A549 (cell line): ENCODE measurements at regions of chr5 and their contacts with region 1.

Region 1: DNA sequence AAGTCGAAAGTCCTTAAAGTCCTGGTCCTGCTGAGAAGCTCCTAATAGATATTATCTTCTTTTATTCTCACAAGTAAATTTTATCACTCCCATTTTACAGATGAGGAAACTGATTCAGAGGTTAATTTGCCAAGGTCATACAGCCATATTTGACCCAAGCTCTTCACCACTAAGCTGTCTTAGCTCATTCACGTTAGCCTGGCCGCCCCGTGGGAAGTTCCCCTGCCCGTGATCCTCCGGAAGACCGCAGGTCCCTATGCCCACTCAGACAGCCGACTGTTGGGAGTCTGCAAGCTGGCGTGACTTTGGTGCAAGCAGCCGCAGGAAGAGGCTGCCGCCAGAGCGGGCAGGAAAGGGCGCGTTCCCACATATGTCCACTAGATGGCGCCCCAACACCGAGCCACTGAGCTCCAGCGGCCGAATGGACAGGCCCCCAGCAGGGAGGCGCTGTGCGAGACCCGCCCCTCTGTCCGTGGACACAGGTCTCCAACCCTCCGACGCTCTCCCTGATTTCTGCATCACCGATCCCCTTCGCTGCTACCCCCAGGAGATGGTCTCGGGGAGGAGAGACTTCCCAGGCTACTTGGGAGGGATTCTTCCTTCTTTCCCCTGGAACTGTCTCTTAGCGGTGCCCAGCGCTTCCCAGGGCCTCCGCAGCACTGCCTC is 10.0 kb upstream of the ARAP3 start:
- DNase-seq: peak; percentile 71 to 74
- ATAC-seq: peak; percentile 91 to 96
- H3K4me3 ChIP-seq: peak overlapping the region; percentile 38
- H3K27ac ChIP-seq: peak overlapping the region in 1 of 2 experiments; percentile 57; a peak in 2 of 6 replicates
- H3K4me1 ChIP-seq: peaks cover 2% of the 10 kb centered on the region; the same call in 1 of the 3 replicates
- CTCF ChIP-seq: peak; percentile 98
- EP300 ChIP-seq: no peak
- POLR2A ChIP-seq: no peak
- RAD21 ChIP-seq: peak; percentile 95 to 99

Region 2: GRCh38 chr5:141223112-141223783 is 468.8 kb before region 1 on chr5 and contains the start of gene PCDHB14:
- CTCF ChIA-PET with region 1: no interaction called
- POLR2A ChIA-PET with region 1: no interaction called
- DNase-seq: peak in 1 of 2 experiments; percentile 36
- ATAC-seq: peak in 1 of 2 experiments; percentile 69; a peak in 3 of 6 replicates
- H3K4me3 ChIP-seq: peak within 1 kb of the TSS; percentile 17; the same call in 1 of the 3 replicates
- H3K27ac ChIP-seq: no peak within 1 kb of the TSS
- H3K4me1 ChIP-seq: no peaks in the 10 kb centered on the region
- CTCF ChIP-seq: peak; percentile 32; the same call in 2 of the 3 replicates
- EP300 ChIP-seq: no peak
- POLR2A ChIP-seq: no peak
- RAD21 ChIP-seq: peak; percentile 49 to 55
- polyA plus RNA-seq, gene PCDHB14: 0.13 and 0.14 TPM in 2 replicates

Region 3: GRCh38 chr5:141664732-141665461 is 27.1 kb before region 1 on chr5:
- CTCF ChIA-PET with region 1: interaction called, 120 read pairs
- POLR2A ChIA-PET with region 1: interaction called, 3 read pairs
- DNase-seq: peak; percentile 69 to 78
- ATAC-seq: peak; percentile 89 to 97
- H3K4me3 ChIP-seq: no peak overlapping the region
- H3K27ac ChIP-seq: no peak overlapping the region
- H3K4me1 ChIP-seq: peaks cover 4% of the 10 kb centered on the region; the same call in 1 of the 3 replicates
- CTCF ChIP-seq: peak; percentile 91
- EP300 ChIP-seq: no peak
- POLR2A ChIP-seq: no peak
- RAD21 ChIP-seq: peak; percentile 84

Region 4: GRCh38 chr5:141757402-141757801 is 65.4 kb after region 1 on chr5:
- CTCF ChIA-PET with region 1: interaction called, 10 read pairs
- POLR2A ChIA-PET with region 1: no interaction called
- DNase-seq: peak; percentile 54 to 72
- ATAC-seq: peak; percentile 71 to 91
- H3K4me3 ChIP-seq: no peak overlapping the region
- H3K27ac ChIP-seq: no peak overlapping the region
- H3K4me1 ChIP-seq: no peaks in the 10 kb centered on the region
- CTCF ChIP-seq: peak; percentile 35; the same call in 2 of the 3 replicates
- EP300 ChIP-seq: no peak
- POLR2A ChIP-seq: no peak
- RAD21 ChIP-seq: peak; percentile 48 to 63; a peak in 3 of 5 replicates

Region 5: GRCh38 chr5:141940695-141941271 is 248.8 kb after region 1 on chr5:
- CTCF ChIA-PET with region 1: interaction called, 17 read pairs
- POLR2A ChIA-PET with region 1: no interaction called
- DNase-seq: peak in 1 of 2 experiments; percentile 23
- ATAC-seq: peak; percentile 75 to 79
- H3K4me3 ChIP-seq: no peak overlapping the region
- H3K27ac ChIP-seq: peak overlapping the region in 1 of 2 experiments; percentile 29; a peak in 1 of 6 replicates
- H3K4me1 ChIP-seq: peaks cover 9% of the 10 kb centered on the region; the same call in 2 of the 3 replicates
- CTCF ChIP-seq: no peak
- EP300 ChIP-seq: no peak
- POLR2A ChIP-seq: no peak
- RAD21 ChIP-seq: no peak

Region 6: GRCh38 chr5:141976176-141976575 is 284.2 kb after region 1 on chr5:
- CTCF ChIA-PET with region 1: interaction called, 325 read pairs
- POLR2A ChIA-PET with region 1: no interaction called
- DNase-seq: no peak
- ATAC-seq: no peak
- H3K4me3 ChIP-seq: no peak overlapping the region
- H3K27ac ChIP-seq: no peak overlapping the region
- H3K4me1 ChIP-seq: peaks cover 10% of the 10 kb centered on the region; the same call in 2 of the 3 replicates
- CTCF ChIP-seq: no peak
- EP300 ChIP-seq: no peak
- POLR2A ChIP-seq: no peak
- RAD21 ChIP-seq: no peak

Region 7: DNA sequence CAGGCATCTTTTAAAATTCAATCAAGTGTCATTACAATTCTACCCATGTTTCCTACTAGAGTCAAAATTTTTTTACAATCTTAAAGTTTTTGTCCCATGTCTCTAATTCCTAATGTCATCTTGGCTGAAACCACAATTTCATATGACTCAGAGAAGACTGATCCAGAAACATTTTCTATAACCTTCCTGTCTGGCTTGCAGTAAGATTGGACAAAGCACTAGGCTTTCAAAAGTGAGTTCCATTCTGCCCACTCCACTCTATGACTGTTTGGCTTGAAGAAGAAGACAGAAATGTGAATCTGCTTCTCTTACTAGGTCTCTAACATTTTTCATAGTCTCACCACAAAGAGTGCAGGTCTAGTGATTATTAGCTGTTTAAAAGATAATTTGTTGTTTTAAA is 1622.7 kb after region 1 on chr5:
- CTCF ChIA-PET with region 1: no interaction called
- POLR2A ChIA-PET with region 1: no interaction called
- DNase-seq: no peak
- ATAC-seq: peak in 1 of 2 experiments; percentile 14; a peak in 1 of 6 replicates
- H3K4me3 ChIP-seq: no peak overlapping the region
- H3K27ac ChIP-seq: peak overlapping the region in 1 of 2 experiments; percentile 29; a peak in 1 of 6 replicates
- H3K4me1 ChIP-seq: peaks cover 95% of the 10 kb centered on the region
- CTCF ChIP-seq: no peak
- EP300 ChIP-seq: no peak
- POLR2A ChIP-seq: no peak
- RAD21 ChIP-seq: no peak